Activated naive CD4-positive, alpha-beta T cell treated with anti-CD3 and anti-CD28 coated beads for 36 hours (primary cell): ENCODE measurements at regions of chr12 and their contacts with region 1.

Region 1: DNA sequence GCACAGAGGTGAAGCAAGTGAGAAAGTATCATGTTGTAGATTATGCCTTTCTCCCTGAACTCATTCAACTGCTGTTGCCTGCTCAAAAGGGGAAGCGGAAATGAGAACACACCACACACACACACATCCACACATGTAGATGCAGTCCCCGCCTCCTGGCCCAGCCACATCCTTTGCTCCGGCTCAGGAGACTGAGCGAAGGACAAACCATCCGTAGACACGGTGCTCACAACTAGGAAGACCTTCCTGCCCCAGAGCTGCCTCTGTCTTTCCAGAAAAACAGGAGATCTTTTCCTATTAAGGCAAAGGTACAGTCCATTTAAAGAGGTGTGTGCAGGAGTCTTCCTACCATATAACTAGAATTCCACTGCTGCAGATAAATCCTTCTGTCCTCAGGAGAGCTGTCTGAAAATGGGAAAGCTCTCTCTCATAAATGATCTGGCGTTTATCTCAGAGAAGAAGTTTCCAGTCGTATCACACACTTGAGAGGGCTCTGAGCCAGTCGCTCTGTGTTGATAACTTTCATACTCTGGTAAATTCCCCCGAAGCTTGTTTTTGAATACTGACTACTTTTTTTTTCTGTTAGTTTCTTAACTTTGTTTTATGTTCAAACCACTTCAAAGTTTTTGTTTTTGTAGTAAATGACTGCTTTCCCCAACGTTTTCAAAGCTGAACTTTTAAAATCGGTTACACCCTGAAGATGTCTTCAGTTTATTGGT is at the start of gene TESPA1:
- DNase-seq: peak; percentile 94
- H3K4me3 Mint-ChIP-seq: peak within 1 kb of the TSS; percentile 75
- H3K27ac Mint-ChIP-seq: peak within 1 kb of the TSS; percentile 89
- H3K4me1 Mint-ChIP-seq: peaks cover 56% of the 10 kb centered on the region
- H3K27me3 Mint-ChIP-seq: no peaks in the 10 kb centered on the region
- total RNA-seq, gene TESPA1: 43.9 to 45.1 TPM

Region 2: GRCh38 chr12:54411391-54412241 is 573.2 kb before region 1 on chr12:
- CTCF ChIA-PET with region 1: no interaction called
- intact Hi-C with region 1: loop called (anchors 5 kb)
- DNase-seq: peak; percentile 71
- H3K4me3 Mint-ChIP-seq: peak overlapping the region; percentile 38
- H3K27ac Mint-ChIP-seq: peak overlapping the region; percentile 96
- H3K4me1 Mint-ChIP-seq: peaks cover 58% of the 10 kb centered on the region
- H3K27me3 Mint-ChIP-seq: no peaks in the 10 kb centered on the region

Region 3: DNA sequence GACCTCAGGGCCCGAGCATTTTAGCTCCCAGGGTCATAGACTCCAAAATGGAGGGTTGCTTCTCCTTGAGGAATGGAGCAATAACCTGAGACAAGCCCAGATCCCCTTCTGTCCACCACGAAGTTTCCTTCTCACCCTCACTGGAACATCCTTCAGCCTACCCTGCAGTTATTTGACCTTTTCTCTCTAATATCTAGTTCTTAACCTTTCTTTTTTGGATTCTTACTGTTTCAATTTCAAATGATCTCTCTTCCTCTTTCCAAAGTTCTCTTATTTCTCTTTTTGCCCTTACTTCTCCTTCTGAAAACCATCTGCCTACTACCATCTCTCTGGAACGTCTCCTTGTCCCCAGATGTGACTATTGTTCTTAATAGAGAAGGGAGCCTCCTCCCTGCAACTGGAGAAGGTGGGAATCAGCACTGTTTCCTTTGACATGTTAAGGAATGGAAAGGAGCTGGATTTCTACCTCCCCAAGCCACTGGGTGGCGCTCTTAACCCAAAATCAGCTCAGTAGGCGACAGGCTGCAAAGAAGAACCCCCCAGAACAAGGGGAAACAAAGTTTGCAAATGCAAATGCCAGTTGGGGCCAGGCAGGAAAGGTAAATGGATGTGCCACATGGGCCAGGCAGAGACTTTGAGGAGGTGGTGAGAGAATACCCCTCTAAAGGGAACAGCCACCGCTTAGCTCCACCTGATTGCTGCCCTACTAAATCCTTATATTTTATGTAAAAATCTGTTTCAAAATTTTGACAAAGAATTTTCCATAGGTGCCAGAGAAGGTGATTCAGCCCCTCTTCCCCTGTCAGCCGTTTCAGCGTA is 457.8 kb before region 1 on chr12:
- CTCF ChIA-PET with region 1: no interaction called
- intact Hi-C with region 1: loop called (anchors 2 kb)
- DNase-seq: peak; percentile 72
- H3K4me3 Mint-ChIP-seq: no peak overlapping the region
- H3K27ac Mint-ChIP-seq: peak overlapping the region; percentile 46
- H3K4me1 Mint-ChIP-seq: peaks cover 22% of the 10 kb centered on the region
- H3K27me3 Mint-ChIP-seq: no peaks in the 10 kb centered on the region

Region 4: DNA sequence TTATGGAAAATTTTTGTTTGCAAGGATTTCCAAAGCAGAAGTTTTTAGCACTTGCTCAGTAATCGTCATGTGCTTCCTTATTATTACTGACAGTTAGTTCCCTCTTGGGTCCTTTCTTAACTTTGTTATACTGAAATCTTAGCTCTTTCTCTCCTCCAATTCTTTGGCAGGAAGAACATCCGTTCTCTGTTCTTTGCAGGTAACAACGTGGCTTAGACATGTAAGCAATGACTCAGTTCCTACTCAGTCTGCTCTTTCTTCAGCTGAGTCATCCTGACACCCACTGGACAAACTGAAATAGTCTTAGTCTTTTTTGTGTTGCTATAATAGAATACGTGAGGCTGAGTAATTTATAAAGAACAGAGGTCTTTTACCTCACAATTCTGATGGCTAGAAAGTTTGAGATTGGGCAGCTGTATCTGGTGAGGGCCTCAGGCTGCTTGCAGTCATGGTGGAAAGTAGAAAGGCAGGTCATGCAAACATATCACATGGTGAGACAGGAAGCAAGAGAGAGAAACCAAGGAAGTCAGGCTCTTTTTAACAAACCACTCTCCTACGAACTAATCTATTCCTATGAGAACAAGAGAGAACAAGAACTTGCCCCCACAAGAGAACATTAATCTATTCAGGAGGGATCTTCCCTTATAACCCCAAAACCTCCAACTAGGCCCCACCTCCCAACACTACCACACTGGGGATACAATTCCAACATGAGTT is 49.4 kb before region 1 on chr12:
- CTCF ChIA-PET with region 1: interaction called, 4 read pairs
- intact Hi-C with region 1: loop called (anchors 1 kb)
- DNase-seq: peak; percentile 69
- H3K4me3 Mint-ChIP-seq: peak overlapping the region; percentile 51
- H3K27ac Mint-ChIP-seq: peak overlapping the region; percentile 93
- H3K4me1 Mint-ChIP-seq: peaks cover 64% of the 10 kb centered on the region
- H3K27me3 Mint-ChIP-seq: no peaks in the 10 kb centered on the region

Region 5: DNA sequence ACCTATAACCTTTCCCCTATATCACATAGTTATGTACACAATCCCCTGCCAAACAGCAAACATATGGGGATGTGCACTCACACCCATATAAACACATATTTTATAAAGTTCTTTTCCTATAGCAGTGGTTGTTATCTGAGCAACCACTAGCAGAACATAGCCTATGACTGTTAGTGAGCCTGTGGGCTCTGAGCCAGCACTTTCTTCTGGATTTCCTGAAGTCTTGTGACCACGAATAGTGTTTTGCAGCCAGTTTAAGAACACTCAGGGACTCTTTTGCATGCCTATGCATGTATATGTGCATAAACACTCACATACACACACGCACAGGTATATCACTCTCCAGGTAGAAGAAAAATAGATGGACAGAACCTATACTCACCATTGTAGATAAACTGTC is 17.4 kb before region 1 on chr12:
- CTCF ChIA-PET with region 1: interaction called, 5 read pairs
- intact Hi-C with region 1: loop called (anchors 2 kb)
- DNase-seq: peak; percentile 47
- H3K4me3 Mint-ChIP-seq: no peak overlapping the region
- H3K27ac Mint-ChIP-seq: peak overlapping the region; percentile 33
- H3K4me1 Mint-ChIP-seq: peaks cover 78% of the 10 kb centered on the region
- H3K27me3 Mint-ChIP-seq: no peaks in the 10 kb centered on the region

Region 6: DNA sequence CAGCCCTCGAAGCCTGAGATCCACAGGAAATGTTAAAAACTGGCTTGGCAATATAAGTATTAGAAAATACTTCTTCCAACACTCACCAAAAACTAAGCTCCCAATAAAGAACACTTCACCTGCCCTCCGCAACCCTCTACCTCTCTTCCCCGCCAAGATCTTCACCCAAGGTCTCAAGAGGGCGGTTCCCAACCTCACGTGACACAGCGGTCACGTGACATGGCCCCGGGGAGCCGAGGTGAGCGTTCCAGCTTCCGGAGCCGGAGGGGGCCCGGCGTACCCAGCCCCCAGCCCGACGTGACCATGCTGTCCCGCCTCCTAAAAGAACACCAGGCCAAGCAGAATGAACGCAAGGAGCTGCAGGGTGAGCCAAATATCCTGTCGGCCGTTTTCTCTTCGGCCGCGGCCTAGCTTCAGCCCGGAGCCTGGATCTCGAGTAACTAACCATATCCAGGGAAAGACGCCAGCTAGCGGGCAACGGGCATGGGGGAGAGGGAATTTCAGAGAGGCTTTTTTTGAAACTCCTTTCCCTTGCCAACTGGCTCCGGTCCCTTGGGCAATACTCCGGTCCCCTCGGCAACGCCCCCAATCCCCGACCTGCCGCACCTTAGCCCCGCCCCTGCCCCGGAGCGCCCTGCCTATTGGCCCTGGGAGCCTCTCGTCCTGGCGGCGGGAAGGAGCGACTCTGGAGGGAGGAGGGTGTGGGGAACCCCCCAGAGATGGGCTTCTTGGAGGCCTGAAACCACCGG is 731.2 kb after region 1 on chr12 and contains the start of gene BLOC1S1:
- CTCF ChIA-PET with region 1: no interaction called
- intact Hi-C with region 1: loop called (anchors 5 kb)
- DNase-seq: peak; percentile 96
- H3K4me3 Mint-ChIP-seq: peak within 1 kb of the TSS; percentile 92
- H3K27ac Mint-ChIP-seq: peak within 1 kb of the TSS; percentile 91
- H3K4me1 Mint-ChIP-seq: peaks cover 28% of the 10 kb centered on the region
- H3K27me3 Mint-ChIP-seq: peaks cover 3% of the 10 kb centered on the region
- total RNA-seq, gene BLOC1S1: 118 to 124 TPM